ENCODE measurements at regions of chr5 and their contacts with region 1.

Region 1: GRCh38 chr5:180253036-180253824 is 38.7 kb downstream of the MAPK9 start:
- DNase-seq: no peak
- ATAC-seq: no peak
- H3K4me3 ChIP-seq: no peak overlapping the region
- H3K4me3 Mint-ChIP-seq: no peak overlapping the region
- H3K27ac ChIP-seq: no peak overlapping the region
- H3K27ac Mint-ChIP-seq: no peak overlapping the region
- H3K4me1 ChIP-seq: no peaks in the 10 kb centered on the region
- H3K4me1 Mint-ChIP-seq: no peaks in the 10 kb centered on the region
- H3K27me3 ChIP-seq: no peaks in the 10 kb centered on the region
- H3K27me3 Mint-ChIP-seq: no peaks in the 10 kb centered on the region
- CTCF ChIP-seq: no peak

Region 2: DNA sequence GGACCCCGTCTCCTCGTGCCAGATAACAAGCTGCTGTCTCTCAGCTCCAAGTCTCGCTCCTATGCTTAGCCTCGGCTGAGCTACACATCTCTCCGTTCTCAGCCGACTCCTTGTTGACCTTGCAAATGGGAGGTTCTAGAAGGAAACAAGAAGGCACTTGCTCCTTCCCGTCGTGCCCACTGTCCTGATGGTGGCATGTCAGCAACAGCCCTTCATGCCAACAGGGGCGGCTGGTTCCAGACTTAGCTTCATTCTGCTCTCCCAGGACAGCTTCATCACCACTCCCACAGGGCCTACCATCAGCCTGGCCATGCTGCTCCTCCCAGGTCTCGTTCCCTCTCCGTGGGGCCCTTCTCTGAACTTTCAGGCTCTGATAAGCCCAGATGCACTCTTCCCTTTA is 31.2 kb before region 1 on chr5:
- CTCF ChIA-PET with region 1: no interaction called
- POLR2A ChIA-PET with region 1: no interaction called
- intact Hi-C with region 1: loop called in 1 of 2 experiments (anchors 1 kb)
- DNase-seq: peak in 1 of 9 experiments; percentile 32
- ATAC-seq: no peak
- H3K4me3 ChIP-seq: no peak overlapping the region
- H3K4me3 Mint-ChIP-seq: no peak overlapping the region
- H3K27ac ChIP-seq: no peak overlapping the region
- H3K27ac Mint-ChIP-seq: no peak overlapping the region
- H3K4me1 ChIP-seq: no peaks in the 10 kb centered on the region
- H3K4me1 Mint-ChIP-seq: no peaks in the 10 kb centered on the region
- H3K27me3 ChIP-seq: no peaks in the 10 kb centered on the region
- H3K27me3 Mint-ChIP-seq: no peaks in the 10 kb centered on the region
- CTCF ChIP-seq: no peak

Measured in CD8-positive, alpha-beta T cell (primary cell).